GM10248 (cell line): ENCODE measurements at regions of chr6 and their contacts with region 1.

Region 1: GRCh38 chr6:16332175-16332542 is 93.8 kb downstream of the GMPR start:
- DNase-seq: peak; percentile 80
- CTCF ChIP-seq: peak; percentile 76

Region 2: DNA sequence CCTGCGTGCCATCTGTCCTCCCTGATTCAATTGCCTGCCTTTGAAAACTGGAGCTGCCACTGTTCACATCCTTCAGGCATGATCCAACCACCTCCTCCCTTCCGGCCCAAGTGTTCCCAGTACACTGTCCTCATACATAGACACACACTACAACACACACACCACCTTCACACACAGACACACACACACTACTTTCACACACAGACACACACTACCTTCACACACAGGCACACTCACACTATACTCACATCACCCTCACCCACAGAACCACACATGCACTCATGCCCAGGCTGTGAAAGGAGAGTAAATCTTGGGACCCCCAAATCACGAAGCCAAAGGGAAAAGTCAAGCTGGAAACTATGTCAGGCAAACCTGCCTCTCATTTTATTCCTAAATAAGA is 312.7 kb before region 1 on chr6:
- CTCF ChIA-PET with region 1: no interaction called
- POLR2A ChIA-PET with region 1: no interaction called
- DNase-seq: no peak
- CTCF ChIP-seq: no peak

Region 3: GRCh38 chr6:16097382-16098171 is 234.6 kb before region 1 on chr6:
- CTCF ChIA-PET with region 1: no interaction called
- POLR2A ChIA-PET with region 1: no interaction called
- DNase-seq: peak; percentile 39
- CTCF ChIP-seq: no peak

Region 4: GRCh38 chr6:16319813-16320532 is 12.2 kb before region 1 on chr6:
- CTCF ChIA-PET with region 1: interaction called, 48 read pairs
- POLR2A ChIA-PET with region 1: no interaction called
- DNase-seq: peak; percentile 59
- CTCF ChIP-seq: no peak

Region 5: DNA sequence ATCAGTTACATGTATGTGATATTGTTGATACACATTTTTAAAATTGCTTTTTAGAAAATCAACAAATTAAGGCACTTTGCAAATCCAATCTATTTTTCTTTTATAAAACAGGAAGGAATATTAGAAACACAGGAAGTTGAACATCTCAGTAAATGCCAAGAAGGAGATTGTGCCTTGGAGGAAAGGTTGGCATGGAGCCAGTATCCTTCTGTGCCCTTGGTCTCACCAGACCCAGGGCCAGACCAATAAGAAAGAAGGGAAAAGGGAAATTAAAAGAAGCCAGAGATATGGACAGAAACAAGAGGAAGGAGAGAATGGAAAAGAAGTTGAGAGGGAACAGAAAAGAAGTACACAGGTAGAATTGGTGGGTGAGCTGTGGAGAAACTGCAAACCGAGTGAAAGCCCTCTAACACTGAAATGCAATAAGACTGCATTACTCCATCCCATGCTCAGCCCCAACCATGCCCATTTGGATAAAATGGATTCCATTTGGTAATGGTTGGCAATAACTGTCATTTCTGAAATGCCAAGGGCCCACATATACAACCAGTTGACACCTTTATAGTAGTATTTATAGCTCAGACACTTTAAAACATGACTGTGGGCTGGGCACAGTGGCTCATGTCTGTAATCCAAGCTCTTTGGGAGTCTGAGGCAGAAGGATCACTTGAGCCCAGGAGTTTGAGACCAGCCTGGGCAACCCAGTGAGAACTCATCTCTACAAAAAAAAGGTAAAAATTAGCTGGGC is 40.0 kb after region 1 on chr6:
- CTCF ChIA-PET with region 1: interaction called, 16 read pairs
- POLR2A ChIA-PET with region 1: no interaction called
- DNase-seq: no peak
- CTCF ChIP-seq: no peak

Region 6: DNA sequence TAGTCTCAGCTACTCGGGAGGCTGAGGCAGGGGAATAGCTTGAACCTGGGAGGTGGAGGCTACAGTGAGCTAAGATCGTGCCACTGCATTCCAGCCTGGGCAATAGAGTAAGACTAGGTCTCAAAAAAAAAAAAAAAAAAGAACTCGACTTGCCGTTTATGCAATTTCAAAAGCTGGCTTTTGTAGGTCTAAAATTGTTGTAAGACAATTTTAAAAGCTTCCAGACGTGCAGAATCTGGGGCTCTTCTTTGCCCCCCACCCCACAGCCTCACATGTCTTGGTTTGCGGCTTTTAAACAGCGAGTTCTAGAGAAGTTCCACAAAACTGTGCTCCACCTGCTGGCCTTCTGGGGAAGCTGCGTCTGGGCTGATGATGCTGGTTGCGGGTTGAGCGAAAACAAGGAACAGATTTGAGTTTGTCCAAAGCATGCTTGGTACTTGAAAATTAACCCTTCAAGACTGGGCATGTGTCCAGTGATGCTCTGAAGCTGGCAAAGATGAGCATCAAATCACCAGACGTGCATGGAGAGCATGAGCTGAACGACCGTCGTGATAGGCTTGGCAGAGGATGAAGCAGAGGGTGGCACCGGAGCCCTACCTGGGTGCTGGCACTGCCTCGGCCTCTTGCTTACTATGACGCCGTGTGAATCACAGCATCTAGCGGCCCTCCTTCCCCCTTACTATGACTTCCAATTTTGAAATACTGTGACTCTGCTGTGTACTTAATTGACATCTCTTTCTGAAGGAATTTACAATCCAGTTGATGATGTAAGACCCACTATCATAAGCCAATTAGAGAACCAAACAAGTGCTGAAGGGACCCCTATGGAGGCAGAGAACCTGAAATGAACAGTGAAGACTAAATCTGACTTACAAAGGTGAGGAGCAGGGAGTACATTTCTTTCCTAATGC is 77.6 kb after region 1 on chr6:
- CTCF ChIA-PET with region 1: interaction called, 36 read pairs
- POLR2A ChIA-PET with region 1: no interaction called
- DNase-seq: peak; percentile 56
- CTCF ChIP-seq: peak; percentile 82

Region 7: DNA sequence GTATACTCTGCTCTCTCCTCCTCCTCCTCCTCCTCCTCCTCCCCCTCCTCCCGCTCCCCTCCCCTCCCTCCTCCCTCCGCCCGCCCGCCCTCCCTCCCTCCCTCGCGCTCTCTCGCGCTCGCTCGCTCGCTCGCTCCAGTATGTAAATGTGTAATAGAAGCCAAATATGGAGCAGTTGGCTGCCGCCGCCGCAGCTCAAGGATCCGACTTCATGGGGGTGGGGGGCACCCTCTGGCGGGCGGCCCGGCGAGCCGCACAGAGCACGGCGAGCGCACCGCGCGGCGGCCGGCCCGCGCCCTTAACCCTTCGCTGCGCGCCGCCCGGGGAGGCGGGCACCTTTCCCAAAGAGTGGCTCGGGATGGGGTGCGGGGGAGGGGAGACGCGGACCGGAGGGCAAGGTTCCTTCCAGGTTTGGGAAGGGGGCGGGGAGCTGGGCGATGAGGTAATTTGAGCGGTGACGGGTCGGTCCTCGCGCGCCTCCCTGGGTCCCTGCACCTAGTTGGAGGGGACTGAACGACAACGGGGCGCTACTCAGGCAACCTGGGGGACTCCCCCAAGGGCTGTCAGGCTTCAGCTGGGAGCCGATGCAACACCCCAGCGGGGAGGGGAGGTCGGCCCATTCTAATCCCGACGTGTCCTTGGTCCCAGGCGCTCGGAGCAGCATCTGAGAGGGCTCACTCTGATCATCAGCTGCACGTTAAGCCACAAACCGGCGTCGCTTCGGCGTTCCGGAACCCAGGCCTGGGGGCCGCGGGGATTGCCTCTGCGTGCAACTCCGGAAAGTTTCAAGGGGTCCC is 429.5 kb after region 1 on chr6:
- CTCF ChIA-PET with region 1: interaction called, 36 read pairs
- POLR2A ChIA-PET with region 1: no interaction called
- DNase-seq: peak; percentile 82
- CTCF ChIP-seq: peak; percentile 43